ENCODE measurements at regions of chr20 and their contacts with region 1.

Region 1: GRCh38 chr20:42435230-42435629 is 754.5 kb downstream of the PTPRT start:
- DNase-seq: no peak
- ATAC-seq: no peak

Region 2: DNA sequence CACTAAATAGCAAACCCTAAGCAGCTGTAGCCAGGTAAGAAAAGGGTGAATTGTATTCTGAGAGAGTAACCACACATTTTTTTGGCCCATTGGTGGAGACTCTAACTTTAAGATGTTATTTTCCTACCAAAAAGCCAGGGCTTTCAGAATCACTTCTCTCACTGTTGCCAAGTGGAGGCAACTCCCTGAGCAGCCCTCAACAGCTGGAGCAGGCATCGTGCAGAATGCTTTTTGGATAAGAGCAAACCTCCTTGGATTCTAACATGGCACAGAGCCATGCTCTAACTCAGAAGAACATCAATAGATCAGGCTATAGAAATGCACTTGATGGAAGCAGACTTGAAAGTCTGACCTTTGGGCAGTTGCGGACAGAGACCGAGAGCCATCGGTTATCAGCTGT is 94.9 kb before region 1 on chr20:
- intact Hi-C with region 1: loop called (anchors 10 kb)
- DNase-seq: no peak
- ATAC-seq: peak; percentile 54

Region 3: GRCh38 chr20:42392442-42392841 is 42.8 kb before region 1 on chr20:
- intact Hi-C with region 1: loop called (anchors 5 kb)
- DNase-seq: no peak
- ATAC-seq: peak; percentile 96